HEK293 (cell line): ENCODE measurements at regions of chrX and their contacts with region 1.

Region 1: DNA sequence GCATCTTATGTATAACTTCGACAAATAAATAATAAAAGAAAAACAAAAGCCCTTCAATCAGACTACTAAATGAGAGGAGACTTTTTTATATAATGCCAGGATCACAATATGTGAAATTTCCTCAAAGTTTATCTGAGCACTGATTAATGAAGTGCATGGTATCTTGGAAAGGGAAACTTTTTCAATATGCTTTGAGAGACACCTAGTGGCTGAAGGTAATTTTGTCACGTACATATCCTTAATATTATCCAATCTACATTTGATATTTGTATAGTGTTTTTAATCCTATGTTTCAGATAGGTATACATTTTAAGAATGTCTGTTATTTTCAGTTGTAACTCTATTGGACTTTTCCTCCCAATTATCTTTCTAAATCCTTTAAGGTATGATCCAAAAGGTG is 146.8 kb downstream of the KLHL4 start:
- H3K4me3 ChIP-seq: no peak overlapping the region
- H3K27ac ChIP-seq: no peak overlapping the region
- H3K4me1 ChIP-seq: no peaks in the 10 kb centered on the region
- CTCF ChIP-seq: peak; percentile 23; the same call in 1 of the 2 replicates

Region 2: GRCh38 chrX:87338510-87338909 is 325.9 kb before region 1 on chrX:
- CTCF ChIA-PET with region 1: interaction called, 21 read pairs
- POLR2A ChIA-PET with region 1: no interaction called
- H3K4me3 ChIP-seq: no peak overlapping the region
- H3K27ac ChIP-seq: no peak overlapping the region
- H3K4me1 ChIP-seq: no peaks in the 10 kb centered on the region
- CTCF ChIP-seq: no peak

Region 3: DNA sequence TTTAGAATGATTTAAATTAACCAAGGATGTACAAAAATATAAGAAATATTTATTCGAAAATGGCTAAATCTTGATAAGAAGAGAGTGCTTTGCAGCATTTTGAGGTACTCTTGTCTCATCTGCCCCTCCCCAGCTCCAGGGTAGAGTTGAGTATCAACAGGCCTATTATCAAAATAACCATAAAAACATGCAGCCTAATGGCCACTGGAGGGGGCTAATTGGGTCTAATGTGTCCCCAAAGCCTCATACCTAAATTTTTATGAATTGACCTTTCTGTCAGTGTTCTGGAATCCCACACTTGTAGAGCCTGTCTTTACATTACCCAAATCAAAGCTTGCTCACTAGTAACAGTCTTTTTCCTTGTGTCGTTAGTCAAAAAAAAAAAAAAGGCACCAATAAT is 537.8 kb after region 1 on chrX:
- CTCF ChIA-PET with region 1: no interaction called
- POLR2A ChIA-PET with region 1: no interaction called
- H3K4me3 ChIP-seq: no peak overlapping the region
- H3K27ac ChIP-seq: no peak overlapping the region
- H3K4me1 ChIP-seq: no peaks in the 10 kb centered on the region
- CTCF ChIP-seq: no peak